ENCODE measurements at regions of chr12 and their contacts with region 1.

Region 1: GRCh38 chr12:24596768-24597388 is 352.0 kb downstream of the BCAT1 start:
- DNase-seq: no peak
- H3K4me3 ChIP-seq: no peak overlapping the region
- H3K27ac ChIP-seq: no peak overlapping the region
- H3K4me1 ChIP-seq: no peaks in the 10 kb centered on the region
- H3K27me3 ChIP-seq: no peaks in the 10 kb centered on the region
- CTCF ChIP-seq: peak; percentile 17 to 68 (median 48)
- EP300 ChIP-seq: no peak
- POLR2A ChIP-seq: no peak

Region 2: DNA sequence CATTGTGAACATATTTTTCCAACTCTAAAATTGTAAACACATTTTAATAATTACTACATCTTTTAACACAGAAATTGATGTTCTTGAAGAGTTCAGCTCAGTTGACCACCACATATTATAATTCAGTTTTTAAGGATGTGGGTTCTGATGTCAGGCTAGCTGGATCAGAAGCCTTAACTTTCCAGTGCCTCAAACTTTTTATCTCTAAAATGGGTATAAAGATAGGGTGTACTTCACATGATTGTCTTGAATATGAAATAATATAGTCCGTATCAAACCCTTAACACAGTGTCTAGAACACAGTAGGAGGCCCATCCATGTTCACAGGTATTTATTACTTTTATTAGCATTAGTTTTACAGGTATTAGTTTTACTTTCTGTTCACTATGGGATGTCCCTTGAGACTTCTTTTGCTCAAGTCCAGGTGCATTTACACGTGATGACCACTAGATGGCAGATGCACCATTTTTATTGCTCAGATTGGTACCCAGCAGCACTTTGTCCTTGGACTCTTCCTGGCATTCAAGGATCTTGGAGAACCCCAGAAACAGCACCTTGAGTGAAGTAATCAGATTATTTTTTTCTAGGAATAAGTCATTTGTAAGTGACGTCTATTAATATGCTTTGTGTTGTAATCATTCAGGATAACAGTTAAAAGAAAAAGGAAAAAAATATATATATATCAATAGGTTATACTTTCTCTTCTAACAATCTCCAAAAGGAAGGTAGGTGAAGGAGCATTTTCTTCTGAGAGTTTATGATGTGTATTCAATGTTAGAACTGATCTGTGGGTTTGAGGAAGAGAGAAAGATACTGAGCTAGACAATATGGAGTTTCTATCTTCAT is 1391.7 kb before region 1 on chr12:
- intact Hi-C with region 1: loop called (anchors 5 kb)
- DNase-seq: no peak
- H3K4me3 ChIP-seq: no peak overlapping the region
- H3K27ac ChIP-seq: no peak overlapping the region
- H3K4me1 ChIP-seq: no peaks in the 10 kb centered on the region
- H3K27me3 ChIP-seq: no peaks in the 10 kb centered on the region
- CTCF ChIP-seq: peak; percentile 37 to 85 (median 76)
- EP300 ChIP-seq: no peak
- POLR2A ChIP-seq: no peak

Region 3: GRCh38 chr12:24109381-24110039 is 487.4 kb before region 1 on chr12:
- intact Hi-C with region 1: loop called (anchors 10 kb)
- DNase-seq: no peak
- H3K4me3 ChIP-seq: no peak overlapping the region
- H3K27ac ChIP-seq: no peak overlapping the region
- H3K4me1 ChIP-seq: no peaks in the 10 kb centered on the region
- H3K27me3 ChIP-seq: no peaks in the 10 kb centered on the region
- CTCF ChIP-seq: peak in 1 of 4 experiments; percentile 38
- EP300 ChIP-seq: no peak
- POLR2A ChIP-seq: no peak